Transverse colon (tissue), 4 donors: ENCODE measurements at regions of chr12 and their contacts with region 1.

Region 1: DNA sequence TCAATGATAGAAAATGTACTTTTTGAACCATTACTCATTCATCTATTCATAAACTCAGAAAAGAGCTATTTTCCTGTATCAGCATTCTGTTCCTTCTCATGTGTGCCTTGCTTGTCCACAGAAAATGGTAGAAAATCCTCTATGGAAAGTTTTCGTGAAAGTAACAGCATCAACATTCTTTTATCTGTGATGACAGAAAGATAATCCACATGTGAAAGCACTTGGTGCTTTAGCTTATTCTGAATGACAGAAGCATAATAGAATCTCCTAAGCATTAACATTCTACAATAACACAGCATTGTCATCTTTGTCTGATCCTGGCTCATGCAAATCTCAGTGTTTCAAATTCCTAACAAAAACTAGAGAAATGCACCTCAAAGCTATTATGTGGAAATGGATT is 431.9 kb downstream of the ADAMTS20 start:
- DNase-seq: no peak
- H3K4me3 ChIP-seq: no peak overlapping the region
- H3K27ac ChIP-seq: no peak overlapping the region
- H3K4me1 ChIP-seq: no peaks in the 10 kb centered on the region
- H3K27me3 ChIP-seq: no peaks in the 10 kb centered on the region
- CTCF ChIP-seq: no peak
- EP300 ChIP-seq: no peak
- POLR2A ChIP-seq: no peak

Region 2: DNA sequence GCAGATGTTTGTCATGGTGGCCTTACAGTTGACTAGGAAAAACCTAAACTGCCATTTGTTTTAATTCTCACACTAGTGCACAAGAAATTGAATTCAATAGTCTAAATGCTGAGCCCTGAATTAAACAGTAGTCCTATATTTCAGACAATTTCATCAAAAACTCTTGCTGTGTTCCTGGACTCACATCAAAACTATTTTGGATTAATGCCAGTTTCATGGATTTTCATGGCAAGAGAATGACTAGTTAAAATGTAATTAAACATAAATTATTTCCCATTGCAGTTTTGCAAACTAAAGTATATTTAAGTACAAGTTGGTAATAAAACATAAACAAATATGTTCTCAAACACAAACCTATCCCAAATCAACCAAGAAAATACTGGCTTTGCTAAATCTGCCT is 62.6 kb before region 1 on chr12:
- in situ Hi-C with region 1: no loop called
- intact Hi-C with region 1: loop called (anchors 2 kb)
- DNase-seq: no peak
- H3K4me3 ChIP-seq: no peak overlapping the region
- H3K27ac ChIP-seq: no peak overlapping the region
- H3K4me1 ChIP-seq: no peaks in the 10 kb centered on the region
- H3K27me3 ChIP-seq: no peaks in the 10 kb centered on the region
- CTCF ChIP-seq: no peak
- EP300 ChIP-seq: no peak
- POLR2A ChIP-seq: no peak

Region 3: DNA sequence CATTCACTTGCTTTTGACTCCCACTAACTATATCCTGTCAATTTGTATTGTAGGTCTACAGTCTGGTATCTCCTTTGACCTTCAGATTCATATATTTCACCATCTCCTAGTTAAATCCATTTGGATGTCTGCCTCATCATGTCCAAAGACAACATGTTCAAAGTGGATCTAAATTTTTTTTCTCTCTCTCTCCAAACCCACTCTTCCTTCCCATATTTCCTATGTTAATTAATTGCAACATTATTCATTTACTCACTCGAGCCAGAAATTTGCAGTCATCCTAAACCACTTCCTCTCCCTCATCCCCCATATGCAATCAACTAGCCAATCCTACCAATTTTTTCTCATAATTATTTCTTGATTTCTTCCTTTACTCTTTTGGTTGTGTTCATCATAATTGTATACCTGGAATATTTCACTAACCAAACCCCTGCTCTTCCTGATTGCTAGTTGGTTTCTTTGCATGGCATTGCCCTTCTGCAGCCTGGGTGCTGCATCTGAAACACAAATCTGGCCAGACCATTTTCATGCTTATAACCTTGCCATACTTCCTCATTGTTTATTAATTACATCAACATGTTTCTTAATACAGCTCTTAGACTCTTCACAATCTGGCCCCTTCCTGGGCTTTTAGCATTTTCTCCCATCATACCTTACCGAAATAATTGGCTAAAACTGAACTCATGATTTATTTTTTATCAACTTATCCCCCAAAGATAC is 10.4 kb before region 1 on chr12:
- in situ Hi-C with region 1: no loop called
- intact Hi-C with region 1: loop called (anchors 1 kb)
- DNase-seq: no peak
- H3K4me3 ChIP-seq: no peak overlapping the region
- H3K27ac ChIP-seq: no peak overlapping the region
- H3K4me1 ChIP-seq: no peaks in the 10 kb centered on the region
- H3K27me3 ChIP-seq: no peaks in the 10 kb centered on the region
- CTCF ChIP-seq: no peak
- EP300 ChIP-seq: no peak
- POLR2A ChIP-seq: no peak

Region 4: DNA sequence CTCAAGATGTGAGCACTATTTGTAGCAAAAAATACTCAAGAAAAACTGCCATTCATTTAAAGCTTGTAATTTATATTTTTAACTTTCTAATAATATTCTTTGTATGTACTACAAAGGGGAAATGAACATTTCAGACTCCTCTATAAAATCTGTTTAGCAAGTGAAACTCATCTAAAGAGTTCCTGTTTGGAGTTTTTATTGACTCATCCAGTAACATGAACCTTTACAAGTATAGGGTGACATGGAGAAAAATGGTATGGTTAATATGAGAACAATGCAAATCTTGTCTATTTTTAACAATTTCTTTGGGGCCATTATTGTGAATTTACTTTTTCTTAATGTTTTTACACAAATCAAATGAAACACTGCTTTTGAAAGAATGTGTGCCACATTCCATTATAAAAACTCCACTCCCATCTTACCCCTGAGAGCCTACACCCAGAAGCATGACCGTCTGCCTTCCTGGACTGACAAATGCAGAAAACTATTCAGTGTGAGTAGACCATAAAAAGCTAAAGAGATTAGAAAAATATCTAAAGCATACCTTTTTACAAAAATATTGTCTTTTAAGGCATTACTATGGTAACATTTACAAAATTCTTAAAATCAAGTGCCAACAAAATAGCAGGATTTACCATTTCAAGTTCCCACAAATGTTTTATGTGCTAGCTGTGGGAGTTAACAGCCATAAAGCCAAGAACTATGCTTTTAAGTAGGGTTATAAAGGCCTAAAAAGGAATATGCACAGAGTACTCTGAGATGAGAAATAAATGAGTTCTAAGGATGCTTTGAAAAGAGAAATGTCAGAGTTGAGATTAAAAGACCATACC is 287.9 kb after region 1 on chr12:
- in situ Hi-C with region 1: no loop called
- intact Hi-C with region 1: no loop called
- DNase-seq: no peak
- H3K4me3 ChIP-seq: no peak overlapping the region
- H3K27ac ChIP-seq: no peak overlapping the region
- H3K4me1 ChIP-seq: no peaks in the 10 kb centered on the region
- H3K27me3 ChIP-seq: no peaks in the 10 kb centered on the region
- CTCF ChIP-seq: no peak
- EP300 ChIP-seq: no peak
- POLR2A ChIP-seq: no peak